ENCODE measurements at regions of chr6 and their contacts with region 1.

Region 1: GRCh38 chr6:24666641-24667377 is at the starts of genes ACOT13 and TDP2:
- DNase-seq: peak; percentile 92 to 99 (median 95)
- ATAC-seq: peak; percentile 92
- H3K4me3 ChIP-seq: peak within 1 kb of the TSS; percentile 96
- H3K4me3 Mint-ChIP-seq: peak within 1 kb of the TSS; percentile 100
- H3K27ac ChIP-seq: peak within 1 kb of the TSS; percentile 78 to 83
- H3K27ac Mint-ChIP-seq: peak within 1 kb of the TSS; percentile 97
- H3K4me1 ChIP-seq: peaks cover 33% of the 10 kb centered on the region
- H3K4me1 Mint-ChIP-seq: peaks cover 45% of the 10 kb centered on the region
- H3K27me3 ChIP-seq: no peaks in the 10 kb centered on the region
- H3K27me3 Mint-ChIP-seq: no peaks in the 10 kb centered on the region
- CTCF ChIP-seq: peak; percentile 39
- total RNA-seq, gene ACOT13: 1.5 TPM
- total RNA-seq, gene TDP2: 63.9 to 64.6 TPM

Region 2: DNA sequence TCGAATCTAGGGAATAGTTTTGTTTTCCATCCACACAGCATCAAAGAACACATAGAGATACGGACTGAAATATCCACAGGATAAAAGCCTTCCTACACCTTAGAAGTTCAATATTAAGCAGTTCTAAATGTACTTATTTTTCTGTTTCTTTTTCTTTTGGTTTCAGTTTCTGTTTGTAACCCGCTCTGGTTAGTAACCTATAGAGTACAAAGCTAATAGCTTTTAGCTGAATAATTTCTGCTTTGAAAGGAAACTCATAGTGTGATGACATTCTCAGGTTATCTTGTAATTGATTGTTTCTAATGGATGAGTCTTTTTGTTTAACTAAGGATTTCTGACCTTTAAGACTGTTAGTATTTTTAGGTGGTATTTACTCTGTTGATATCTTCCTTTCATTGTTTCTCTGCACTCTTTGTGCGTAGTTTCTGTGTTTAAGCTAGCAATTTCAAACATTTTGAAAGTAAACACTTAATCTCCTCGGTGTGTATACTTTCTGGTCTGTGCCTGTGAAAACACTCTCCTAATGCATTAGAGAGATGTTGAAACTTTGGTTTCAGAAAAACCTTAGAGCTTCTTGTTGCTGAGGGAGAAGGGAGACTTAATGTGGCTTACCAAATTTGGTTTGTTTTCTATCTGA is 1711.9 kb before region 1 on chr6:
- CTCF ChIA-PET with region 1: no interaction called
- POLR2A ChIA-PET with region 1: no interaction called
- intact Hi-C with region 1: no loop called
- DNase-seq: peak in 1 of 14 experiments; percentile 15
- ATAC-seq: no peak
- H3K4me3 ChIP-seq: peak overlapping the region; percentile 34
- H3K4me3 Mint-ChIP-seq: peak overlapping the region; percentile 57
- H3K27ac ChIP-seq: no peak overlapping the region
- H3K27ac Mint-ChIP-seq: peak overlapping the region; percentile 15
- H3K4me1 ChIP-seq: no peaks in the 10 kb centered on the region
- H3K4me1 Mint-ChIP-seq: peaks cover 32% of the 10 kb centered on the region
- H3K27me3 ChIP-seq: no peaks in the 10 kb centered on the region
- H3K27me3 Mint-ChIP-seq: no peaks in the 10 kb centered on the region
- CTCF ChIP-seq: no peak

Region 3: GRCh38 chr6:24323632-24324337 is 343.0 kb before region 1 on chr6:
- CTCF ChIA-PET with region 1: no interaction called
- POLR2A ChIA-PET with region 1: no interaction called
- intact Hi-C with region 1: no loop called
- DNase-seq: no peak
- ATAC-seq: no peak
- H3K4me3 ChIP-seq: no peak overlapping the region
- H3K4me3 Mint-ChIP-seq: no peak overlapping the region
- H3K27ac ChIP-seq: no peak overlapping the region
- H3K27ac Mint-ChIP-seq: no peak overlapping the region
- H3K4me1 ChIP-seq: no peaks in the 10 kb centered on the region
- H3K4me1 Mint-ChIP-seq: no peaks in the 10 kb centered on the region
- H3K27me3 ChIP-seq: peaks cover 2 to 9% of the 10 kb centered on the region in 2 experiments
- H3K27me3 Mint-ChIP-seq: peaks cover 56% of the 10 kb centered on the region
- CTCF ChIP-seq: no peak

Region 4: GRCh38 chr6:24646782-24647181 is 20.0 kb before region 1 on chr6:
- CTCF ChIA-PET with region 1: interaction called, 17 read pairs
- POLR2A ChIA-PET with region 1: interaction called, 28 read pairs
- intact Hi-C with region 1: loop called (anchors 1 to 2 kb)
- DNase-seq: no peak
- ATAC-seq: no peak
- H3K4me3 ChIP-seq: no peak overlapping the region
- H3K4me3 Mint-ChIP-seq: peak overlapping the region; percentile 87
- H3K27ac ChIP-seq: no peak overlapping the region
- H3K27ac Mint-ChIP-seq: peak overlapping the region; percentile 68
- H3K4me1 ChIP-seq: peaks cover 11% of the 10 kb centered on the region
- H3K4me1 Mint-ChIP-seq: peaks cover 17% of the 10 kb centered on the region
- H3K27me3 ChIP-seq: peaks cover 6% of the 10 kb centered on the region in 2 experiments
- H3K27me3 Mint-ChIP-seq: peaks cover 17% of the 10 kb centered on the region
- CTCF ChIP-seq: no peak

Region 5: DNA sequence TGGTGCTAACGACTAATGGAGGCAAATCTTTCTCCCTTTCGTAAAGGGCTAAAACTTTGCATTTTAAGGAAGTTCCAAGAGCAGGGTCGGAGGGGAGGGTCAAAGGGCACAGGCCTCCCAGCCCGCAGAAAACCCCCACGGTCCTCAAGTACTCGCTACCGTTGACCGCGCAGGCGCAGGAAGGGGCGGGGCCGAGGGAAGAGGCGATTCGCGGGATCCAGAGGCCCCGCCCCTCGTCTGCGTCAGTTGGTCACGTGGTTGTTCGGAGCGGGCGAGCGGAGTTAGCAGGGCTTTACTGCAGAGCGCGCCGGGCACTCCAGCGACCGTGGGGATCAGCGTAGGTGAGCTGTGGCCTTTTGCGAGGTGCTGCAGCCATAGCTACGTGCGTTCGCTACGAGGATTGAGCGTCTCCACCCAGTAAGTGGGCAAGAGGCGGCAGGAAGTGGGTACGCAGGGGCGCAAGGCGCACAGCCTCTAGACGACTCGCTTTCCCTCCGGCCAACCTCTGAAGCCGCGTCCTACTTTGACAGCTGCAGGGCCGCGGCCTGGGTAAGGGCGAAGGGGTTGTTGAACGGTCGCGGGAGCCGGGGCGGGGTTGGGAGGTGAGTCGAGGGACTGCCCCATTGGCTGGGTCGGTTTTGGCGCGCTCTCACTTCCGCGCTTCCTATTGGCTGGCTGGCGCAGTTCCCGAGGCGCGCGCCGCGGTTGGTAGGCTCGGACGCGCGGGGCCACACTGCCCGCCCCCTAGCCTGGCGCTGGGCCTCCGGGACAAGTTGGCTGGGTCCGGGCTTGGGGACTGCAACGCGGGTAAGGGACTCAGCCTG is 108.1 kb after region 1 on chr6 and contains the start of gene GMNN:
- CTCF ChIA-PET with region 1: no interaction called
- POLR2A ChIA-PET with region 1: interaction called, 8 read pairs
- intact Hi-C with region 1: loop called in 1 of 2 experiments (anchors 5 kb)
- DNase-seq: peak; percentile 95 to 99 (median 97)
- ATAC-seq: peak; percentile 83
- H3K4me3 ChIP-seq: peak within 1 kb of the TSS; percentile 99
- H3K4me3 Mint-ChIP-seq: peak within 1 kb of the TSS; percentile 99
- H3K27ac ChIP-seq: peak within 1 kb of the TSS; percentile 87 to 94
- H3K27ac Mint-ChIP-seq: peak within 1 kb of the TSS; percentile 99
- H3K4me1 ChIP-seq: peaks cover 15% of the 10 kb centered on the region
- H3K4me1 Mint-ChIP-seq: peaks cover 32% of the 10 kb centered on the region
- H3K27me3 ChIP-seq: no peaks in the 10 kb centered on the region
- H3K27me3 Mint-ChIP-seq: no peaks in the 10 kb centered on the region
- CTCF ChIP-seq: no peak
- total RNA-seq, gene GMNN: 10.1 to 10.5 TPM

Region 6: DNA sequence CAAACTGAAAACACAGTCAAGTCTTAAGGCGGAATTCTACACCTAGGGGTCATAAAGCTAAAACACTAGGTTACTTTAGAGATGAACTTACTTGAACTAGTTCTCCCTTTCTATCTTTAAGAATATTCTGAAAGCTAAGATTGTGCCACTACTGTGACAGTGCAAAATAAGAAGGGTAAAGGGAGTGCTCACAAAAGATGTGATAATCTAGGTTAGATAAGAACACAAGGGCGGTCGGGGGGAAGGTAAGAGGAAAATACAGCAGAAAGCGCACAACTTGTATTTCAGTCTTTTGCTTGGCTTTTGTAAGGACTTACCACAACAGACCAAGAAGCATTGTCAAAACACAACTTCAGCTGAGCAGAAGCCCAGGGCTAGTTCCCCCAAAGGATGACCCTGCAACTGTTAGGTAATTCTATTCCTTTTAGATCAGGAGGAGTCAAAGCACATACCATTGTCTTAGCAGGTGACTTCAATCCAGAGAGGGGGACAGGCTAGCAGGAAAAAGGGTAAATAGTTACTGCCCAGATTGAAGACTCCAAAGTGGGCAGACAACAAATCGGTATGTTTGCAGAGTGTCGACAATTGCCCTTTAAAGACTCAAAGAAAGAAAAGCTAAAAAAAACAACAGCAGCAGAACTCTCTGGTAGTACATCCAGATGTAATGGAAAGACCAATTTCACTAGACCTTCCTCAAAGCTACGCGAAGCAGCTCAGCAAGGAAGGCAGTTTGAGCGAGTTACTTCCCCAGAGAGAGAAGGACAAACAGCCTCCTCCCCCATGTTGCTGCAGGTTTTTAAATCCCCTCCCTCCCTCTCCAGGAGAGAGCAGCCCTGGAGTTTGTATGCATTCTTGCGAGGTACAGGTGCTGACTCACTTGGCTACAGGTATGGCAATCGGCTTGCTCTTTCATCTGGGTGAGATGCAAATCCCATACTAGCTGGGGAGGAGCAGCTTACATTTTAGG is 210.0 kb after region 1 on chr6:
- CTCF ChIA-PET with region 1: no interaction called
- POLR2A ChIA-PET with region 1: no interaction called
- intact Hi-C with region 1: no loop called
- DNase-seq: no peak
- ATAC-seq: no peak
- H3K4me3 ChIP-seq: no peak overlapping the region
- H3K4me3 Mint-ChIP-seq: peak overlapping the region; percentile 30
- H3K27ac ChIP-seq: peak overlapping the region in 1 of 2 donors; percentile 51
- H3K27ac Mint-ChIP-seq: peak overlapping the region; percentile 97
- H3K4me1 ChIP-seq: peaks cover 33% of the 10 kb centered on the region
- H3K4me1 Mint-ChIP-seq: peaks cover 94% of the 10 kb centered on the region
- H3K27me3 ChIP-seq: no peaks in the 10 kb centered on the region
- H3K27me3 Mint-ChIP-seq: no peaks in the 10 kb centered on the region
- CTCF ChIP-seq: no peak